Pancreas (tissue), 10 donors: ENCODE measurements at regions of chr16 and their contacts with region 1.

Region 1: DNA sequence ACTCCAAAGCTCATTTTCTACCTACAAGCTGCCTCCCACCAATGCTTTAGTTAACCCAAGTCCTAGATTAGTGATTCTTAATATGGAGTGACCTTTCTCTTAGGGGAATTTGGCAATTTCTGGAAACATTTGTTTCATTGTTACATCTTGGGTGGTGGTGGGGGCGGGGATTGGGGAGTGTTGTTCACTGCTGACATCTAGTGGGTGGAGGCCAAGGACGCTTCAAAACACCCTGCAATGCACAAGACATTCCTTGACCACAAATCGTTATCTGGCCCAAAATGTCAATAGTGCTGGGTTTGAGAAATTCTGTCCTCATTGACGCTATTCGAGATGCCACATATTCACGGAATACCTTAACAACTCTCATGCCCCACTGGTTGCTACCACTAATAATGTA is 282.9 kb downstream of the RBFOX1 start:
- DNase-seq: no peak
- ATAC-seq: no peak
- H3K4me3 ChIP-seq: no peak overlapping the region
- H3K27ac ChIP-seq: no peak overlapping the region
- H3K4me1 ChIP-seq: no peaks in the 10 kb centered on the region
- H3K27me3 ChIP-seq: peaks cover 0 to 3% (median 0%) of the 10 kb centered on the region in 4 donors
- CTCF ChIP-seq: no peak

Region 2: GRCh38 chr16:7550096-7550495 is 65.5 kb before region 1 on chr16:
- intact Hi-C with region 1: loop called in 1 of 3 experiments (anchors 10 kb)
- DNase-seq: no peak
- ATAC-seq: no peak
- H3K4me3 ChIP-seq: no peak overlapping the region
- H3K27ac ChIP-seq: no peak overlapping the region
- H3K4me1 ChIP-seq: no peaks in the 10 kb centered on the region
- H3K27me3 ChIP-seq: no peaks in the 10 kb centered on the region
- CTCF ChIP-seq: no peak

Region 3: DNA sequence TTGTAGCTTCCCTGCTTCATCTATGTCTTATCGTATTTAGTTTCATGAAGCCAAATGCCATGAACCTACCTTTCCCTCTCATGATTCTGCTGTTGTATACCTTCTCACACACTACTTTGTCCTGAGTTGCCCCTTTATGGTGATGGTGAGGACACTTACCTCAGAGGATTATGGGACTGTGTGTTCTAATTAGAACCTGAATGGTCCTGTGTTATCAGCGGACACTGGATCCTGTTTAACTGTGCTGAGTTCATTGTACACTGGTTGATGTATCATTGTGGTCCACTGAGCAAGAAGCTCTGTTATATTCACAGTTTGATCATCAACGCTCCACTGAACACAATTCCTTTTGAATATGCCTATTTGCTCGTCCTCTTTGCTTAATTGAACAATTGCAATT is 60.1 kb after region 1 on chr16:
- intact Hi-C with region 1: loop called in 1 of 3 experiments (anchors 10 kb)
- DNase-seq: no peak
- ATAC-seq: no peak
- H3K4me3 ChIP-seq: no peak overlapping the region
- H3K27ac ChIP-seq: no peak overlapping the region
- H3K4me1 ChIP-seq: no peaks in the 10 kb centered on the region
- H3K27me3 ChIP-seq: no peaks in the 10 kb centered on the region
- CTCF ChIP-seq: no peak